Right cardiac atrium (tissue), 5 donors: ENCODE measurements at regions of chr4 and their contacts with region 1.

Region 1: DNA sequence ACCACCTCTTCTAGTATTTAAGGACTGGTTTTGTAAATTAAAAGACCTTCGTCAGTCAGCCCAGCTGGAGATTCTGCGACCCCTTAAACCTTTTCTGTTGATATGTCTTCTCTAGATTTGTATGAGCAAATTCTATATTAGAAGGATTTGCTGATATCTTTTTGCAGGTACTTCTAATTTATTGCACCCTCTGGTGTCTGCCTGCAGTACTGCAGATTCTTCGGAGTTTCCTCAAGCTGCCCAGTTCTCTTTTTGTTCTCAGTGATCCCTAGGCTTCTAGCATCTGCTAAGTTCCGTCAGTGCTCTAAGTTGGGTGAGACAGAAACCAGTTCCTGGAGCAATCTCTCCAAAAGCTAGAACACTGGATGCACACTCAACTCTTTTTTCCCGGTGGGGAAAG is 545.2 kb downstream of the C4orf33 start:
- DNase-seq: peak in 2 of 3 donors; percentile 33 to 68
- ATAC-seq: peak in 1 of 2 donors; percentile 31
- H3K4me3 ChIP-seq: no peak overlapping the region
- H3K27ac ChIP-seq: no peak overlapping the region
- H3K4me1 ChIP-seq: no peaks in the 10 kb centered on the region
- H3K27me3 ChIP-seq: no peaks in the 10 kb centered on the region

Region 2: GRCh38 chr4:129362674-129363274 is 278.4 kb before region 1 on chr4:
- intact Hi-C with region 1: loop called in 1 of 4 experiments (anchors 10 kb)
- DNase-seq: peak in 2 of 3 donors; percentile 33 to 73
- ATAC-seq: peak; percentile 54 to 73
- H3K4me3 ChIP-seq: no peak overlapping the region
- H3K27ac ChIP-seq: no peak overlapping the region
- H3K4me1 ChIP-seq: no peaks in the 10 kb centered on the region
- H3K27me3 ChIP-seq: no peaks in the 10 kb centered on the region

Region 3: DNA sequence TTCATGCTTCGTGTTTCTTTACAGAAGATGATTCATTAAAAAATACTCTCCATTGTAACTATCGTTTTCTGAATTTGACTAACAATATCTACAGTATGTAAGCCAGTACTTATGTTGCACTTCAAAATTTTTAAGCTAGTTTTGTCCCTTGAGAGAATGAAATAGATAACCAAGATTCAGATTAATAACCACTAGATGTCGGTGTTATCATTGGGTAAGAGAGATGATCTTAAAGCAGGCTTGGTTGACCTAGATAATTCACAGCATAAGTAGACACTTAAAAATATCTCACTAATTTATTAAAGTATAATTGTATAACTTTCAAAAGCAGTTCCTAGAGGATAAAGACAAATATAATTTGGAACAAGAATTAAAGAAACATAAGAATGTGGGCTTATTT is 114.4 kb before region 1 on chr4:
- intact Hi-C with region 1: loop called in 3 of 4 experiments (anchors 2 to 10 kb)
- DNase-seq: no peak
- ATAC-seq: peak; percentile 15 to 47
- H3K4me3 ChIP-seq: no peak overlapping the region
- H3K27ac ChIP-seq: no peak overlapping the region
- H3K4me1 ChIP-seq: no peaks in the 10 kb centered on the region
- H3K27me3 ChIP-seq: no peaks in the 10 kb centered on the region